ENCODE measurements at regions of chr13 and their contacts with region 1.

Region 1: GRCh38 chr13:44267966-44268365 is 105.7 kb upstream of the SERP2 start:
- DNase-seq: peak; percentile 91
- ATAC-seq: peak; percentile 83
- H3K4me3 ChIP-seq: no peak overlapping the region
- H3K27ac ChIP-seq: peak overlapping the region; percentile 95
- H3K4me1 ChIP-seq: peaks cover 43% of the 10 kb centered on the region
- H3K27me3 ChIP-seq: no peaks in the 10 kb centered on the region
- CTCF ChIP-seq: no peak

Region 2: GRCh38 chr13:44084146-44084545 is 183.8 kb before region 1 on chr13:
- CTCF ChIA-PET with region 1: no interaction called
- POLR2A ChIA-PET with region 1: interaction called, 15 read pairs
- intact Hi-C with region 1: no loop called
- DNase-seq: no peak
- ATAC-seq: no peak
- H3K4me3 ChIP-seq: no peak overlapping the region
- H3K27ac ChIP-seq: no peak overlapping the region
- H3K4me1 ChIP-seq: no peaks in the 10 kb centered on the region
- H3K27me3 ChIP-seq: no peaks in the 10 kb centered on the region
- CTCF ChIP-seq: no peak

Region 3: GRCh38 chr13:44306401-44307192 is 38.6 kb after region 1 on chr13:
- CTCF ChIA-PET with region 1: no interaction called
- POLR2A ChIA-PET with region 1: no interaction called
- intact Hi-C with region 1: loop called (anchors 2 kb)
- DNase-seq: peak; percentile 95
- ATAC-seq: peak; percentile 73
- H3K4me3 ChIP-seq: peak overlapping the region; percentile 47
- H3K27ac ChIP-seq: peak overlapping the region; percentile 100
- H3K4me1 ChIP-seq: peaks cover 73% of the 10 kb centered on the region
- H3K27me3 ChIP-seq: no peaks in the 10 kb centered on the region
- CTCF ChIP-seq: no peak